CD4-positive, alpha-beta T cell (primary cell): ENCODE measurements at regions of chr18 and their contacts with region 1.

Region 1: GRCh38 chr18:63963615-63964256 is 6.1 kb upstream of the SERPINB8 start:
- DNase-seq: peak in 13 of 14 experiments; percentile 17 to 78 (median 44)
- ATAC-seq: peak; percentile 93
- H3K4me3 ChIP-seq: no peak overlapping the region
- H3K4me3 Mint-ChIP-seq: no peak overlapping the region
- H3K27ac ChIP-seq: no peak overlapping the region
- H3K27ac Mint-ChIP-seq: no peak overlapping the region
- H3K4me1 ChIP-seq: no peaks in the 10 kb centered on the region
- H3K4me1 Mint-ChIP-seq: peaks cover 2% of the 10 kb centered on the region
- H3K27me3 ChIP-seq: no peaks in the 10 kb centered on the region
- H3K27me3 Mint-ChIP-seq: peaks cover 25% of the 10 kb centered on the region
- CTCF ChIP-seq: peak; percentile 81

Region 2: GRCh38 chr18:63979409-63979920 is 15.7 kb after region 1 on chr18:
- CTCF ChIA-PET with region 1: interaction called, 12 read pairs
- POLR2A ChIA-PET with region 1: interaction called, 4 read pairs
- intact Hi-C with region 1: loop called (anchors 1 kb)
- DNase-seq: peak in 10 of 14 experiments; percentile 6 to 73 (median 26)
- ATAC-seq: peak; percentile 78
- H3K4me3 ChIP-seq: no peak overlapping the region
- H3K4me3 Mint-ChIP-seq: no peak overlapping the region
- H3K27ac ChIP-seq: no peak overlapping the region
- H3K27ac Mint-ChIP-seq: no peak overlapping the region
- H3K4me1 ChIP-seq: peaks cover 5% of the 10 kb centered on the region
- H3K4me1 Mint-ChIP-seq: peaks cover 7% of the 10 kb centered on the region
- H3K27me3 ChIP-seq: no peaks in the 10 kb centered on the region
- H3K27me3 Mint-ChIP-seq: no peaks in the 10 kb centered on the region
- CTCF ChIP-seq: peak; percentile 89

Region 3: DNA sequence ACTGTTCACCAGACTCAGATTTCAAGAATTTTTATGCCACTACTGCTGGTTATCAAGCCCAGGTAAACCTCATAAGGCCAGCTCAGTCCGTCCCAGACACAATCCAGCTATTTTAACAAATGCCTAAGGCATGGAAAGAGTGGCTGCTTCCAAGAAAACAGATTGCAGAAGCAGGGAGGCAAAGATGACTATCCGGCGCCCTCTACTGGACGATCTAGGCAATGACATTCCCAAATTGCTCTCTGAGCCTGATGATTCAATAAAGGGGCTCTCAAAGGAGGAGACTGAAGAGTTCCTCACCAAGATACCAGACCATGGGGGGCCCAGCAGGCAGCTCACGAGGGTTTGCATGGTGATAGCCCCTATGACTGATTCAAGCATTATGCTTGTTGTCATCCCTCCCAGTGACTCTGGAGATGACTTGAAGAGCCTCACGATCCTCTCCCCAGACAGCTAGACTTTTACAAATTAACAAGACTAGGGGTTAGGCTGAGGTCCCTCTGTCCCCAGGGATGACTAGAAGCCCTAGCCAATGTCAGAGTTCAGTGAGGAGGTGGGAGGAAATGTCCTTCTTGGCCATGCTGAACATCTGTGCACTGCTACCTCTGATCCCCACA is 31.2 kb after region 1 on chr18:
- CTCF ChIA-PET with region 1: interaction called, 3 read pairs
- POLR2A ChIA-PET with region 1: no interaction called
- intact Hi-C with region 1: loop called in 1 of 2 experiments (anchors 2 kb)
- DNase-seq: peak in 12 of 14 experiments; percentile 6 to 61 (median 28)
- ATAC-seq: no peak
- H3K4me3 ChIP-seq: no peak overlapping the region
- H3K4me3 Mint-ChIP-seq: no peak overlapping the region
- H3K27ac ChIP-seq: no peak overlapping the region
- H3K27ac Mint-ChIP-seq: no peak overlapping the region
- H3K4me1 ChIP-seq: no peaks in the 10 kb centered on the region
- H3K4me1 Mint-ChIP-seq: peaks cover 4% of the 10 kb centered on the region
- H3K27me3 ChIP-seq: no peaks in the 10 kb centered on the region
- H3K27me3 Mint-ChIP-seq: peaks cover 10% of the 10 kb centered on the region
- CTCF ChIP-seq: peak; percentile 80